ENCODE measurements at regions of chrX and their contacts with region 1.

Region 1: DNA sequence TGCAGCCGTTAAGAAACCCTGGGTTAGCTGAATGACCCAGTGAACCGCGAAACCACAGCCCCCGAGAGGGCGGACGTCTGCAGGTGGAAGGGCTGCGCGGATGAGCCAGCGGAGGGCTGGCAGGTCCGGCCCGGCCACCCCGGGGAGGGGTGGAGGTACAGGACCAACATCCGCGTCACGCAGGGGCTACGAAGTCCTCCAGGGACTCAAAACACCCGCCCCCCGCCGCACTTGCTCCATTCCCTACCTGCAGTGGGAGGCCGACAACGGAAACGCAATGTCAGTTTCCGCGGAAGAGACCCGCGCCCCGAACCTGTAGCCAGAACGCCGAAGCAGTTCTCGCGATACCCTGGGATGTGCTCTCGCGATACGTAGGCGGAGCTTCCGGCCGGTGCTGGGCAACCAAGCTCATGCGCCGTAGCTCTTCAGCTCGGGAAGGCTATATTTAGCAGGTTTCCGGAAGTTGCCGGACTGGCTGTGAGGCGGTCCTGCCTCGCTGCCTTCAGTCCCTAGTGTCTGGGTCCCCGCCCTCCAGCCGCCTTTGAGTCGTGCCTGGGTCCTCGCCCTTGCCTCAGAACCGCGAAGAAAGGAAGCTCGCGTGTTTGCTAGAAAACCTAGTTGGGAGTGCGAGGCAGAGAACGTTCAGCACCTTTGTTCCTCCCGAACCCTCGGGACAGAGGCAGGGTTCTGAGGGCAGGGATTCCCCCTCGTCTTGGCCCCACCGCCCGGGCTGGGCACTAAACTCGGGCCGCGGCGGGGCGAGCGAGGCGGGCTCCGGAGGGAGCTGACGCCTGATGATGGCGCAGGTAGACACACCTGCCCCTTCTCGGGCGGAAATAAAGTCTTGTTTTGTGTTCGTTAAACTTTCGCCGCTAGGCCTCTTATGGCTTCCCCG is at the starts of genes OFD1 and TRAPPC2:
- DNase-seq: peak; percentile 88
- H3K4me3 Mint-ChIP-seq: peak within 1 kb of the TSS; percentile 97
- H3K27ac Mint-ChIP-seq: peak within 1 kb of the TSS; percentile 98
- H3K4me1 Mint-ChIP-seq: peaks cover 49% of the 10 kb centered on the region
- H3K27me3 Mint-ChIP-seq: peaks cover 2% of the 10 kb centered on the region
- total RNA-seq, gene OFD1: 21.9 and 22.0 TPM in 2 replicates
- total RNA-seq, gene TRAPPC2: 16.4 and 16.5 TPM in 2 replicates

Region 2: GRCh38 chrX:12791257-12792228 is 943.0 kb before region 1 on chrX and contains the start of gene PRPS2:
- intact Hi-C with region 1: loop called (anchors 10 kb)
- DNase-seq: peak; percentile 62
- H3K4me3 Mint-ChIP-seq: peak within 1 kb of the TSS; percentile 88
- H3K27ac Mint-ChIP-seq: peak within 1 kb of the TSS; percentile 76
- H3K4me1 Mint-ChIP-seq: peaks cover 41% of the 10 kb centered on the region
- H3K27me3 Mint-ChIP-seq: peaks cover 8% of the 10 kb centered on the region
- total RNA-seq, gene PRPS2: 115 and 116 TPM in 2 replicates

Region 3: DNA sequence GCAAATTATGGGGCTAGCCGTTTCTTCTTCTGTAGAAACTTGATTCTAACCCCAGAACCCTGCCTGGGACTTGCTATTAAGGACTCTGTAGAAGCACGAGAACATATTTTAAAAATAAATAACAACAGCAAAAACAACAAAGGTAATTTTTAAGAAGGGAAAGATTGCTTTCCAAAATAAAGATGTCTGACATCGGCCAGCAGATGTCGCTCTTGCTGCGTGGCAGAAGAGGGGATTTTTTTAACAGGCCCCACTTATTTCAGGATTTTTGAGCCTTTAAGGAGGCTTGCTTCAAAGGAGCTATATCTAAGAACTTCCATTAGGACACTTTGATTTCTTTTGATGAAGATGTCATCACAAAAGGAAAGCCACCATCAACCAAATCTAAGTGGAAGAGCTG is 228.0 kb before region 1 on chrX:
- intact Hi-C with region 1: loop called (anchors 2 kb)
- DNase-seq: peak; percentile 2
- H3K4me3 Mint-ChIP-seq: no peak overlapping the region
- H3K27ac Mint-ChIP-seq: no peak overlapping the region
- H3K4me1 Mint-ChIP-seq: peaks cover 9% of the 10 kb centered on the region
- H3K27me3 Mint-ChIP-seq: no peaks in the 10 kb centered on the region

Region 4: GRCh38 chrX:13669246-13669737 is 65.2 kb before region 1 on chrX:
- intact Hi-C with region 1: loop called (anchors 5 kb)
- DNase-seq: peak; percentile 29
- H3K4me3 Mint-ChIP-seq: peak overlapping the region; percentile 47
- H3K27ac Mint-ChIP-seq: peak overlapping the region; percentile 90
- H3K4me1 Mint-ChIP-seq: peaks cover 13% of the 10 kb centered on the region
- H3K27me3 Mint-ChIP-seq: no peaks in the 10 kb centered on the region

Region 5: DNA sequence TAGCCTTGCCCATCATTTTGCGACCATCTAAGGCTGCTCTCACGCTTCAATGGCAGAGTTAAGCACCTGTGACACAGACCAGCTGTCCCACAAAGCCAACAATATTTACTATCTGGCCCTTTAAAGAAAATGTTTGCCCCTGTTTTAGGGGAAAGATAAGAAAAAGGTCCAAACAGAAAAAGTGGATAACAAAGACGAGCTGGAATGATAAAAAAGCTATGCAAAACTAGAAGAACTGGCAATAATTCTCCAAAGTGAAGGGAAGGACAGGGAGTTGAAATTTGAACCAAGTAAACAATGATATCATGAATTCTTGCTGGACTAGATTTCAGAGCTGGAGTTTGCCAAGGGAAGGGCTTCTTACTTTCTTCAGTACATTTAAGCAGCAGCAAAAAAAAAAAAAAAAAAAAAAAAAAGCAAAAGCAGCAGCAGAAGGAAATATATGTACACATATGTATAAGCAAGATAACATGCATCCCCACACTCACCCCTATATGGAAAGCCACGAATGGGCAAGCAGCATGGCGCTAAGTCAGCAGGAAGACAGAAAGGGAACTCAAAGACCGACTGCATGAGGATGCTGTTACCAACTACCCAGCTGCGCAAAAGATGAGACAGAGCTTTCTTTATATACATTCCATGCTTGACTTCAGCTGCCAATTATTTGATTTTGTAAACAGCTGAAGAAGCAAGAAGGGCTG is 12.6 kb before region 1 on chrX:
- intact Hi-C with region 1: loop called (anchors 1 kb)
- DNase-seq: no peak
- H3K4me3 Mint-ChIP-seq: no peak overlapping the region
- H3K27ac Mint-ChIP-seq: no peak overlapping the region
- H3K4me1 Mint-ChIP-seq: peaks cover 50% of the 10 kb centered on the region
- H3K27me3 Mint-ChIP-seq: no peaks in the 10 kb centered on the region